Adrenal gland (tissue), 19 donors: ENCODE measurements at regions of chr16 and their contacts with region 1.

Region 1: GRCh38 chr16:67806428-67807147 is at the starts of genes RANBP10 and TSNAXIP1:
- DNase-seq: peak; percentile 96 to 99 (median 99)
- H3K4me3 ChIP-seq: peak within 1 kb of the TSS; percentile 61 to 99 (median 82)
- H3K27ac ChIP-seq: peak within 1 kb of the TSS; percentile 58 to 84 (median 78)
- H3K4me1 ChIP-seq: peaks cover 16 to 18% of the 10 kb centered on the region in 2 donors
- H3K27me3 ChIP-seq: no peaks in the 10 kb centered on the region
- CTCF ChIP-seq: peak in 1 of 6 experiments; percentile 18
- POLR2A ChIP-seq: peak; percentile 76 to 93
- total RNA-seq, gene RANBP10: 9.4 to 74.1 (median 23.1) TPM
- total RNA-seq, gene TSNAXIP1: 0.72 to 3.6 (median 2.1) TPM

Region 2: DNA sequence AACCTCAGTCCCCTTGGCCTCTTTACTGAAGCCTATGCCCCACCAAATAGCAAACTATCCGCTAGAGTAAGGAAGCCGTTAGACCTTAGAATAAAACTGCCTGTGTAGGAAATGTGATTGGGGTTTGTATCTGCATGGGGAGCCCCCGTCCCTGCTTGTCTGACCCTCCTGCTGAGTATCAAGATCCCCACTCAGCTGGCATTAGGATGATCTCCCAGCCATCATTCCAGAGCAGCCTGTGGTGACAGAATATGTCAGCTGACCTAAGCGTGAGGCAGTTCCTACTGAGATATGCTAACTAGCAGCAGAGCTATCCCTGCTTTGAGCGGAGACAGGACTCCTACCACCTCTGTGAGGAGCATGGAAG is 86.8 kb before region 1 on chr16:
- intact Hi-C with region 1: loop called in 1 of 2 experiments (anchors 10 kb)
- DNase-seq: peak in 6 of 7 donors; percentile 53 to 75 (median 66)
- H3K4me3 ChIP-seq: peak overlapping the region in 3 of 4 donors; percentile 79 to 86 (median 84)
- H3K27ac ChIP-seq: peak overlapping the region; percentile 76 to 91 (median 90)
- H3K4me1 ChIP-seq: peaks cover 16 to 21% of the 10 kb centered on the region in 2 donors
- H3K27me3 ChIP-seq: no peaks in the 10 kb centered on the region
- CTCF ChIP-seq: no peak
- POLR2A ChIP-seq: no peak